Tibial artery (tissue), 4 donors: ENCODE measurements at regions of chr9 and their contacts with region 1.

Region 1: DNA sequence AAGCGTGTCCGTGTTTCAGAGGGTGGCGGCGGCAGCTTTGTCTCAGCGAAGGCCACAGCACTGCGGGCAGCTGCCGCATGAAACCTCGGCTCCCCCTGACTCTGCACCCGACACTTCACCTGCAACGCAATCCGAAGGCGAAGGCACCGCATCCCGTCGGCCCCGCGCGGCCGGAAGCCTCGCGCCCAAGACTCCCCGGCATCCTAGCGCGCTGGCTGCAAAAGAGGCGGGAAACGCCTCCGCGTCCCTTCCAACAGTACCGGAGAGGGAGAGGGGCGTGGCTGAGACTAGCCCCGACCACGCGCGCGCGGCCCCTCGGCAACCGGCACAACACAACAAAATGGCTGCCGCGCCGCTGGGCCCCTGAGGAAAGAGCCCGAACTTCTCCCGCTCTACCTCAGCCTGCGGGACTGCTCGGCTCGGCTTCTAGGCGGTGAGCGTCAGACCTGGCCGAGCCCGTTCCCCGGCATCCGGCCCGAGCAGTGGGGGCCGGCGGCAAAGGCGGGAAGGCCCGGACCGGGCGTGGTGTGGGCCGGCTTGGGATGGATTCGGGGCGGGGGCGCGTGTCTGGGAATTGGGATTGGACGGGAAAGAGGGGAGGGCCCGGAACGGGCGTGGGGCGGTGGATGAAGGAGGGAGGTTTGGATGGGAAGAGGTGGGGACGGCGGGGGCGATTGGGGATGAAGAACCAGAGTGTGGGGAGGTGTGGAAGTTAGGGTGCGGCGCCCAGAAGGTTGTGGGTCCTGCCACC is at the start of gene CNTRL:
- DNase-seq: peak; percentile 95 to 96
- H3K4me3 ChIP-seq: peak within 1 kb of the TSS; percentile 74 to 88
- H3K27ac ChIP-seq: peak within 1 kb of the TSS; percentile 91 to 95
- H3K4me1 ChIP-seq: peaks cover 0 to 30% (median 21%) of the 10 kb centered on the region in 4 donors
- H3K27me3 ChIP-seq: no peaks in the 10 kb centered on the region
- CTCF ChIP-seq: no peak

Region 2: DNA sequence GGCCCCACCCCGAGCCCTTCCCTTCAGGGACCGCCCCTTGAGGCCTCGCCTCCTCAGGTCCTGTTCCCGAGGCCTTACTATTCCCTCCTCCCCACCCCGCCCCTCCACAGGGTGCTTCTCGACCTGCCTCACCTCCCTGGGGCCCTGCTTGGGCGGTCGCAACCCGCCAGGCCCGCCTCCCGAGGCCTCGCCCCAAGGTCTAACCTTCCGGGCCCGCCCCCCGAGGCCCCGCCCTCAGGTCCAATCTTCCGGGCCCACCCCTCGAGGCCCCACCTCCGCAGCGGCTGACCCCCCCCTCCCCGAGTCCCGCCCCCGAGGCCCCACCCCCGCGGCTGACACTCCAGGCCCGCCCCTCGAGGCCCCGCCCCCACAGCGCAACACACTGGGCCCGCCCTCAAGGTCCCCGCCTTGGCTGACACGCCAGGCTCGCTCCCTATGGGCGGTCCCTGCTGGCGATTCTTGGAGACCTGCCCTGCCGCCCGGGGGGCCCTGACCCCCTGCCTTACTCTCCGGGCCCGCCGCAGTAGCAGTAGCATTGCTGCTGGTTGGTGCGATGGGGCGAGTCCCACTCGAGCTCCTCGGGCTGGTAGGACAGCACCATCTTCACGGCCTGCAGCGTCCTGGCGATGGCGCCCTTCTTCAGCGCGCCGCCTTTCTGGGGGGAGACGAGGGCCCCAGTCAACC is 206.0 kb before region 1 on chr9:
- intact Hi-C with region 1: loop called (anchors 10 kb)
- DNase-seq: peak; percentile 96 to 99
- H3K4me3 ChIP-seq: peak overlapping the region; percentile 54 to 61
- H3K27ac ChIP-seq: peak overlapping the region; percentile 81 to 87
- H3K4me1 ChIP-seq: peaks cover 0 to 17% (median 12%) of the 10 kb centered on the region in 4 donors
- H3K27me3 ChIP-seq: no peaks in the 10 kb centered on the region
- CTCF ChIP-seq: peak in 1 of 2 experiments; percentile 38

Region 3: DNA sequence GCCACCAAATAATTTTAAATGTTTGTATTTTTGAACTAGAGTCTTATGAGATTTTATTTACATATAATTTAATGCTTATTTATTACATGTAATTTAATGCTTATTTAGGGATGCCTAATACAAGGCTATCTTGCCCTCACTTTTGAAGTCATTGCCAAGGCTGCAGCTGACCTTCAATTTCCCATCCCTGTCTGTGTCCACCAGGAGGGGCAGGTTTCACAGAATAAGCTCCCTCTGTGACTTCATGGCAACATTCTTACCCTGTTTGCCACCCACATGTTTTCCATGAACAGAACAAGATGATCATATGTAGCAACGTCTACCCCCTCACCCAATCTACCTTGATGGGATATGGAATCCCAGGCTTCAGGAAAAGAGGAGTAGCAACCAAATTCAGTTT is 51.7 kb before region 1 on chr9:
- intact Hi-C with region 1: no loop called
- DNase-seq: no peak
- H3K4me3 ChIP-seq: no peak overlapping the region
- H3K27ac ChIP-seq: no peak overlapping the region
- H3K4me1 ChIP-seq: no peaks in the 10 kb centered on the region
- H3K27me3 ChIP-seq: no peaks in the 10 kb centered on the region
- CTCF ChIP-seq: no peak

Region 4: GRCh38 chr9:121121582-121122087 is 46.8 kb after region 1 on chr9:
- intact Hi-C with region 1: loop called (anchors 2 kb)
- DNase-seq: peak; percentile 99
- H3K4me3 ChIP-seq: peak overlapping the region; percentile 42 to 46
- H3K27ac ChIP-seq: peak overlapping the region; percentile 46 to 48
- H3K4me1 ChIP-seq: peaks cover 0 to 11% (median 0%) of the 10 kb centered on the region in 4 donors
- H3K27me3 ChIP-seq: no peaks in the 10 kb centered on the region
- CTCF ChIP-seq: peak; percentile 48 to 53